CD14-positive monocyte (primary cell): ENCODE measurements at regions of chr17 and their contacts with region 1.

Region 1: GRCh38 chr17:8745586-8746500 is 1.2 kb upstream of the CCDC42 start:
- DNase-seq: peak; percentile 68 to 73 (median 69)
- H3K4me3 ChIP-seq: peak overlapping the region; percentile 55 to 88 (median 76)
- H3K4me3 Mint-ChIP-seq: peak overlapping the region; percentile 89 to 93
- H3K27ac ChIP-seq: peak overlapping the region; percentile 42 to 80
- H3K27ac Mint-ChIP-seq: peak overlapping the region; percentile 84 to 91 (median 88)
- H3K4me1 ChIP-seq: peaks cover 7 to 10% of the 10 kb centered on the region in 2 donors
- H3K4me1 Mint-ChIP-seq: peaks cover 15% of the 10 kb centered on the region
- H3K27me3 ChIP-seq: no peaks in the 10 kb centered on the region
- H3K27me3 Mint-ChIP-seq: peaks cover 1 to 22% (median 18%) of the 10 kb centered on the region in 3 donors
- CTCF ChIP-seq: peak; percentile 99

Region 2: DNA sequence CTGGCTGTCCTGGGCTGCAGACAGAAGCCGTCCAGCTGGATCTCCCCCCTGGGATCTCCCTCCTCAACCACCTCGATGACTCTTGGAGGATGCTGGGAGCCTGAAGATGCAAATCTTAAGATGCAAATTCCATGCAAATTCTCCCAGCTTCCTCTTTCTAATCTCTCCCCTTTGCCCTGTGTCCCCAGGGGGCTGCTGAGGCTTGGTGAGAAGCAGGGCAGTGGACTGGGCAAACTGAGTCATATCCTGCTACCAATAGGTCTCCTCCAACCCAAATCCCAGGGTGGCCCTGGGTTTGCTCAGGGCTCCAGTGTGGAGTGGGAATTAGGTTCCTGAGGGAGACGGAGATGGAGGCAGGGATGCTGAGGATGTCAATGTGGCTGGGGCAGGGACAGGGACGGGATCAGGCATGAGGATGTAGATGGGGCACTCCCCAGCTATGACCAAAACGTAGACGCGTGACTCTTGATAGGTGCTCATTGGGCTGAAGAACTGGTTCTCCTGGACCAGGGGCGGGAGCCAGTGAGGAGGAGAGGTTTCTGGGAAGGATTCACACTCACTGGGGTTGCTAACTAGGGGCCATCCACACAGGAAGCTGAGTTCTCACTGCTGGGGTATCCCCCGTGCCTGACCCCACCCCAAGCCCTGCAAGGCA is 654.7 kb before region 1 on chr17:
- intact Hi-C with region 1: loop called in 1 of 2 experiments (anchors 10 kb)
- DNase-seq: peak in 2 of 3 donors; percentile 17 to 63
- H3K4me3 ChIP-seq: no peak overlapping the region
- H3K4me3 Mint-ChIP-seq: peak overlapping the region in 1 of 2 donors; percentile 37
- H3K27ac ChIP-seq: no peak overlapping the region
- H3K27ac Mint-ChIP-seq: no peak overlapping the region
- H3K4me1 ChIP-seq: peaks cover 0 to 7% of the 10 kb centered on the region in 2 donors
- H3K4me1 Mint-ChIP-seq: peaks cover 9% of the 10 kb centered on the region
- H3K27me3 ChIP-seq: peaks cover 0 to 10% of the 10 kb centered on the region in 2 donors
- H3K27me3 Mint-ChIP-seq: peaks cover 25 to 58% (median 34%) of the 10 kb centered on the region in 3 donors
- CTCF ChIP-seq: no peak

Region 3: DNA sequence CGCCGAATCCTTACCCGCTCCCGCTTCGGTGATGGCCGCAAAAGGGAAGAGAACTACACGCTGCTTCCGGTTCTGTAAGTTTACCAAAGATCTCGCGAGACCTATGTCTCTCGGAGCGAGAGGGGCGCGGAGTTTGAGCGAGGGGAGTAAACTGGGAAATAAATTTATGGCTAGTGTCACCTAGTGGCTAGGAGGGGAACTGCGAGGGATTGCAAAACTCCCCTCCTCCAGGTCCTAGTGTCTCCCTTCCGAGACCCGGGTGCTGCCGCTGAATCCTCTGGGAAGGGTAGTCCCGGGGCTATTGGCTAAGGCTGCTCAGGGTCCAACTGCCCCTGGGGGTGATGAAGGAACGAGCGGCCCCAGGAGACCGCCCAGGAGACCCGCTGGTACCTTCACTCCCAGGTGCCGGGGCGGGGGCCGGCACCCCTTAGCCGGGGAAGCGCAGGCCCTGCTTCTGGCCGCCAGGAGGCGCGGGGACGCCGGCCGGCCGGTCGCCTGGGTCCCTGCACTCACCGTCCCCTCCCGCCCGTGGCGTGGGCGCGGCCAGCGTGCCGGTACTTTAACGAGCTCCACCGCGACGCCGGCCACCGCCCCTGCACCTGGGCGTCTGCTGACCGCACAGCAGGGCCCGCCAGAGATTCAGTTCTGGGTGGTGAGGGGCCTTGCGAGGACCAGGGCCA is 362.6 kb before region 1 on chr17 and contains the start of gene RPL26:
- intact Hi-C with region 1: loop called (anchors 10 kb)
- DNase-seq: peak; percentile 96 to 99 (median 97)
- H3K4me3 ChIP-seq: peak within 1 kb of the TSS; percentile 72 to 89 (median 74)
- H3K4me3 Mint-ChIP-seq: peak within 1 kb of the TSS; percentile 95 to 98
- H3K27ac ChIP-seq: peak within 1 kb of the TSS; percentile 60 to 79
- H3K27ac Mint-ChIP-seq: peak within 1 kb of the TSS; percentile 89 to 95 (median 93)
- H3K4me1 ChIP-seq: peaks cover 28 to 34% of the 10 kb centered on the region in 2 donors
- H3K4me1 Mint-ChIP-seq: peaks cover 34% of the 10 kb centered on the region
- H3K27me3 ChIP-seq: no peaks in the 10 kb centered on the region
- H3K27me3 Mint-ChIP-seq: no peaks in the 10 kb centered on the region
- CTCF ChIP-seq: peak; percentile 100
- polyA plus RNA-seq, gene RPL26: 859 to 4,469 (median 884) TPM

Region 4: GRCh38 chr17:8791910-8792270 is 46.0 kb after region 1 on chr17:
- intact Hi-C with region 1: loop called in 1 of 2 experiments (anchors 5 kb)
- DNase-seq: peak; percentile 81 to 93 (median 86)
- H3K4me3 ChIP-seq: no peak overlapping the region
- H3K4me3 Mint-ChIP-seq: no peak overlapping the region
- H3K27ac ChIP-seq: peak overlapping the region; percentile 27 to 76
- H3K27ac Mint-ChIP-seq: peak overlapping the region; percentile 66 to 95 (median 86)
- H3K4me1 ChIP-seq: peaks cover 41 to 56% of the 10 kb centered on the region in 2 donors
- H3K4me1 Mint-ChIP-seq: peaks cover 48% of the 10 kb centered on the region
- H3K27me3 ChIP-seq: no peaks in the 10 kb centered on the region
- H3K27me3 Mint-ChIP-seq: peaks cover 0 to 4% (median 0%) of the 10 kb centered on the region in 3 donors
- CTCF ChIP-seq: no peak

Region 5: GRCh38 chr17:9050801-9051401 is 305.1 kb after region 1 on chr17:
- intact Hi-C with region 1: no loop called
- DNase-seq: no peak
- H3K4me3 ChIP-seq: no peak overlapping the region
- H3K4me3 Mint-ChIP-seq: no peak overlapping the region
- H3K27ac ChIP-seq: no peak overlapping the region
- H3K27ac Mint-ChIP-seq: no peak overlapping the region
- H3K4me1 ChIP-seq: no peaks in the 10 kb centered on the region
- H3K4me1 Mint-ChIP-seq: no peaks in the 10 kb centered on the region
- H3K27me3 ChIP-seq: no peaks in the 10 kb centered on the region
- H3K27me3 Mint-ChIP-seq: peaks cover 2 to 9% (median 5%) of the 10 kb centered on the region in 3 donors
- CTCF ChIP-seq: no peak